Endothelial cell of umbilical vein (primary cell): ENCODE measurements at regions of chr2 and their contacts with region 1.

Region 1: DNA sequence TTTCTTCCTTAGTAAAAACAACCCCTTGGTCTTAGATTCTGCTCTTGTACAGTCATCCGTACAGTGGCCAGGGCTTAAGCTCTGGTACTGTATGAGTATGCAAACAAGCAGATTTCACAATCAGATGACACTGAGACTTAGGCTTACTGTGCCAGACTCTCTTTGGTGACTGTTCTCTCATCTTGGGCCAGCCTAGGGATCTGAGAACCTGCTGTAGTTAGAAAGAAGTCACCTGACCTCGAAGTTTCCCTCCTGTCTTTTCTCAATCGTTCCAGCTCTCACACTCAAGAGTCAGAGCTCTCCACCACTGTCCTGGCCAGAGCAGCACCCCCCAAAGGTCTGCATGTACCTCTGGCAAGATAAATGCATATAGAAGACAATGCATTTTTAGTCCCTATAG is 63.2 kb downstream of the ZEB2 start:
- DNase-seq: peak; percentile 64
- H3K4me3 ChIP-seq: no peak overlapping the region
- H3K27ac ChIP-seq: no peak overlapping the region
- H3K4me1 ChIP-seq: peaks cover 69% of the 10 kb centered on the region
- H3K27me3 ChIP-seq: no peaks in the 10 kb centered on the region
- CTCF ChIP-seq: no peak
- POLR2A ChIP-seq: no peak

Region 2: DNA sequence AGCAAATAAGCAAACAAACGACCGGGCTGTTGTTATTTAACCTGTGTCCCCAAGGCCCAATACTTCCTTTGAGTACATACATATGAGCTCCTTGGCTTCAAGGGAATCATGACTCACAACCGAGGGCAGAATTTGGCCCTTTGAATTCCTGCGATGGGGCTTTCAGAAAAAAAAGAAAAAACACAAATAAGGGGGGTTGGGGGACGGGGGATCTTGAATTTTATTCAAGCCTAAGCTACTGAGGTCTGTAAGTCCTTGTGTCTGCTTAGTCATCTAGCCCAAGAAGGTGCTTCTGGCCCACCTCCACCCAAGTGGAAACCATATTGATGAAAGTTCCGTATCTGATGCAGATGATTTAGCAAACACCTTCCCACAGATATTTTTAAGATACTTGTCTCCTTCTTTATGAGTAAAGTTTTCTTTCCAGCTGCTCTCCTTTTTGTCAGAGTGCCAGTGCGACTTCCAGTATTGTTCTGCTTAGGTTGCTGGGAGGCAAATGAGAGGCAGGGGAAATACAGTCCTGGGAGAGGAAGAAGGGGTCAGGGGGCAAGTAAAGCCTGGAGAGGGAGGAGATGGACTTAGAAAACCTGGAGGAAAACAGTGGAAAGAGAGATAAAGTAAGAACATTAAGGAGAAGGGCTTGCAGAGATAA is 106.4 kb before region 1 on chr2:
- CTCF ChIA-PET with region 1: no interaction called
- POLR2A ChIA-PET with region 1: no interaction called
- dilution Hi-C with region 1: no loop called
- intact Hi-C with region 1: loop called (anchors 1 kb)
- DNase-seq: peak; percentile 99
- H3K4me3 ChIP-seq: peak overlapping the region in 2 of 3 experiments; percentile 0 to 9
- H3K27ac ChIP-seq: peak overlapping the region; percentile 79
- H3K4me1 ChIP-seq: peaks cover 32% of the 10 kb centered on the region
- H3K27me3 ChIP-seq: no peaks in the 10 kb centered on the region
- CTCF ChIP-seq: no peak
- POLR2A ChIP-seq: no peak